ENCODE measurements at regions of chr20 and their contacts with region 1.

Region 1: GRCh38 chr20:45890985-45891983 is at the starts of genes CTSA and NEURL2:
- DNase-seq: peak; percentile 55
- H3K4me3 ChIP-seq: peak within 1 kb of the TSS; percentile 54 to 92 (median 82)
- H3K27ac ChIP-seq: peak within 1 kb of the TSS; percentile 73 to 91 (median 88)
- H3K4me1 ChIP-seq: peaks cover 23 to 53% (median 23%) of the 10 kb centered on the region in 3 donors
- H3K27me3 ChIP-seq: no peaks in the 10 kb centered on the region
- CTCF ChIP-seq: peak in 1 of 6 experiments; percentile 47
- POLR2A ChIP-seq: peak in 2 of 4 donors; percentile 44 to 63
- total RNA-seq, gene CTSA: 44.5 to 74.8 (median 56.8) TPM
- total RNA-seq, gene NEURL2: 4.1 to 6.5 (median 5.5) TPM

Region 2: GRCh38 chr20:45946149-45946970 is 55.1 kb after region 1 on chr20:
- intact Hi-C with region 1: loop called (anchors 10 kb)
- DNase-seq: no peak
- H3K4me3 ChIP-seq: no peak overlapping the region
- H3K27ac ChIP-seq: peak overlapping the region in 3 of 4 donors; percentile 78 to 84 (median 79)
- H3K4me1 ChIP-seq: peaks cover 22 to 82% (median 27%) of the 10 kb centered on the region in 3 donors
- H3K27me3 ChIP-seq: no peaks in the 10 kb centered on the region
- CTCF ChIP-seq: no peak
- POLR2A ChIP-seq: no peak

Measured in esophagus squamous epithelium (tissue), 5 donors.